ENCODE measurements at regions of chr1 and their contacts with region 1.

Region 1: GRCh38 chr1:201119206-201120197 is 7.3 kb upstream of the CACNA1S start:
- DNase-seq: peak in 1 of 2 experiments; percentile 81
- H3K4me3 ChIP-seq: no peak overlapping the region
- H3K27ac ChIP-seq: no peak overlapping the region
- H3K4me1 ChIP-seq: peaks cover 0 to 3% (median 0%) of the 10 kb centered on the region in 4 experiments; a peak in 1 of 7 replicates
- H3K27me3 ChIP-seq: peaks cover 9 to 22% (median 17%) of the 10 kb centered on the region in 4 experiments
- CTCF ChIP-seq: peak; percentile 91 to 98 (median 98)
- EP300 ChIP-seq: no peak
- POLR2A ChIP-seq: no peak
- RAD21 ChIP-seq: peak; percentile 80 to 86

Region 2: GRCh38 chr1:200992382-200993048 is 127.0 kb before region 1 on chr1:
- CTCF ChIA-PET with region 1: interaction called, 12 read pairs
- POLR2A ChIA-PET with region 1: no interaction called
- DNase-seq: no peak
- H3K4me3 ChIP-seq: no peak overlapping the region
- H3K27ac ChIP-seq: no peak overlapping the region
- H3K4me1 ChIP-seq: no peaks in the 10 kb centered on the region
- H3K27me3 ChIP-seq: no peaks in the 10 kb centered on the region
- CTCF ChIP-seq: no peak
- EP300 ChIP-seq: no peak
- POLR2A ChIP-seq: no peak
- RAD21 ChIP-seq: no peak

Region 3: GRCh38 chr1:201042779-201043461 is 76.6 kb before region 1 on chr1:
- CTCF ChIA-PET with region 1: interaction called, 10 read pairs
- POLR2A ChIA-PET with region 1: no interaction called
- DNase-seq: peak in 1 of 2 experiments; percentile 72
- H3K4me3 ChIP-seq: no peak overlapping the region
- H3K27ac ChIP-seq: no peak overlapping the region
- H3K4me1 ChIP-seq: no peaks in the 10 kb centered on the region
- H3K27me3 ChIP-seq: no peaks in the 10 kb centered on the region
- CTCF ChIP-seq: peak; percentile 88 to 98 (median 90)
- EP300 ChIP-seq: no peak
- POLR2A ChIP-seq: no peak
- RAD21 ChIP-seq: peak; percentile 94 to 95

Region 4: GRCh38 chr1:201096035-201096434 is 23.5 kb before region 1 on chr1:
- CTCF ChIA-PET with region 1: interaction called, 39 read pairs
- POLR2A ChIA-PET with region 1: no interaction called
- DNase-seq: no peak
- H3K4me3 ChIP-seq: no peak overlapping the region
- H3K27ac ChIP-seq: no peak overlapping the region
- H3K4me1 ChIP-seq: peaks cover 0 to 3% (median 0%) of the 10 kb centered on the region in 4 experiments; a peak in 1 of 7 replicates
- H3K27me3 ChIP-seq: 0 out of 7 replicates have a peak, but pooled peaks cover 0 to 1% (median 0%) of the 10 kb centered on the region in 4 experiments
- CTCF ChIP-seq: no peak
- EP300 ChIP-seq: no peak
- POLR2A ChIP-seq: no peak
- RAD21 ChIP-seq: no peak

Region 5: GRCh38 chr1:201149400-201149799 is 29.9 kb after region 1 on chr1:
- CTCF ChIA-PET with region 1: interaction called, 14 read pairs
- POLR2A ChIA-PET with region 1: interaction called, 5 read pairs
- DNase-seq: no peak
- H3K4me3 ChIP-seq: no peak overlapping the region
- H3K27ac ChIP-seq: no peak overlapping the region
- H3K4me1 ChIP-seq: peaks cover 0 to 7% (median 2%) of the 10 kb centered on the region in 4 experiments; a peak in 2 of 7 replicates
- H3K27me3 ChIP-seq: no peaks in the 10 kb centered on the region
- CTCF ChIP-seq: peak in 2 of 3 experiments; percentile 50 to 63; a peak in 2 of 4 replicates
- EP300 ChIP-seq: no peak
- POLR2A ChIP-seq: no peak
- RAD21 ChIP-seq: peak; percentile 28 to 54; a peak in 3 of 4 replicates

Region 6: GRCh38 chr1:201275041-201275676 is 155.7 kb after region 1 on chr1:
- CTCF ChIA-PET with region 1: no interaction called
- POLR2A ChIA-PET with region 1: no interaction called
- DNase-seq: no peak
- H3K4me3 ChIP-seq: no peak overlapping the region
- H3K27ac ChIP-seq: no peak overlapping the region
- H3K4me1 ChIP-seq: peaks cover 0 to 4% (median 0%) of the 10 kb centered on the region in 4 experiments; a peak in 2 of 7 replicates
- H3K27me3 ChIP-seq: peaks cover 0 to 3% (median 0%) of the 10 kb centered on the region in 4 experiments; a peak in 1 of 7 replicates
- CTCF ChIP-seq: no peak
- EP300 ChIP-seq: no peak
- POLR2A ChIP-seq: no peak
- RAD21 ChIP-seq: no peak

Measured in H1 (cell line).